ENCODE measurements at regions of chr9 and their contacts with region 1.

Region 1: GRCh38 chr9:27529316-27530278 is at the start of gene MOB3B:
- DNase-seq: peak; percentile 82
- H3K4me3 Mint-ChIP-seq: peak within 1 kb of the TSS; percentile 85
- H3K27ac Mint-ChIP-seq: no peak within 1 kb of the TSS
- H3K4me1 Mint-ChIP-seq: peaks cover 4% of the 10 kb centered on the region
- H3K27me3 Mint-ChIP-seq: peaks cover 6% of the 10 kb centered on the region
- total RNA-seq, gene MOB3B: 0.34 to 0.38 TPM

Region 2: GRCh38 chr9:27333241-27334052 is 196.2 kb before region 1 on chr9:
- CTCF ChIA-PET with region 1: interaction called, 74 read pairs
- POLR2A ChIA-PET with region 1: no interaction called
- intact Hi-C with region 1: loop called (anchors 1 kb)
- DNase-seq: peak; percentile 53
- H3K4me3 Mint-ChIP-seq: no peak overlapping the region
- H3K27ac Mint-ChIP-seq: no peak overlapping the region
- H3K4me1 Mint-ChIP-seq: peaks cover 3% of the 10 kb centered on the region
- H3K27me3 Mint-ChIP-seq: peaks cover 2% of the 10 kb centered on the region

Region 3: DNA sequence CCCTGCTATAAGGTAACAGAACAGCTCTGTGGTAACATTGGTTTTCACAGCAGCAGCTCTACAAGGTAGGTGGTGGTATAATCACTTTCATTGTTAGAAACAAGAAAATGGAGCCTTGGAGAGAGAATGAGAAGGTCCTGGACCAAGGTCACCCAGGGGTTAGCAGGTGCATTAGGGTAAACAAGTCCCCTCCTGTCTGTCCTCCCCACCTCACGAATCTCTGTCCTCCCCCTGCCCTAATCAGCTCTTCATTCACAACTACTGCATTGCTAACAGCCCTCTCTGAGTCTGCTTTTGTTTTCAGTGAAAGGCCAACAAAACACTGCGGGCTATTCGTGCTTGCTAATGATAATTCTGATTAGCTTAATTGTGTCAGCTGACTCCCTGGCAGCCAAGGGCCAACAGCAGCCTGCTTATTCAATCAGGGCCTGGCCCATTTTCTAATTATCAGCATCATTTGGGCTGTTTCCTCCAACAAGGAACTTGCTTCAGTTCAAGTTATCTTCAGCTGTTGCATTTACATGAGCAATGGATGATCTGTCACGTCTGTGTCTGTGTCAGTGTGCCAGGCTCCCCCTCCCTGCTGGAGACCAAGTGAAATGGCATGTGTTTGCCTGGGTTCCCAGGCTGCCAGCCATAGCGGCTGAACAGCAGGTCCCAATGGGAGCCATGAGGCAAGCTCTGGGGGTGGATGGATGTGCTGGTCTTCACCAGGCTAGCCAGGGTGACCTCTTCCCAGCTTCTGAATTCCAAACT is 175.9 kb before region 1 on chr9:
- CTCF ChIA-PET with region 1: interaction called, 4 read pairs
- POLR2A ChIA-PET with region 1: no interaction called
- intact Hi-C with region 1: loop called (anchors 5 kb)
- DNase-seq: no peak
- H3K4me3 Mint-ChIP-seq: no peak overlapping the region
- H3K27ac Mint-ChIP-seq: no peak overlapping the region
- H3K4me1 Mint-ChIP-seq: peaks cover 8% of the 10 kb centered on the region
- H3K27me3 Mint-ChIP-seq: no peaks in the 10 kb centered on the region

Region 4: DNA sequence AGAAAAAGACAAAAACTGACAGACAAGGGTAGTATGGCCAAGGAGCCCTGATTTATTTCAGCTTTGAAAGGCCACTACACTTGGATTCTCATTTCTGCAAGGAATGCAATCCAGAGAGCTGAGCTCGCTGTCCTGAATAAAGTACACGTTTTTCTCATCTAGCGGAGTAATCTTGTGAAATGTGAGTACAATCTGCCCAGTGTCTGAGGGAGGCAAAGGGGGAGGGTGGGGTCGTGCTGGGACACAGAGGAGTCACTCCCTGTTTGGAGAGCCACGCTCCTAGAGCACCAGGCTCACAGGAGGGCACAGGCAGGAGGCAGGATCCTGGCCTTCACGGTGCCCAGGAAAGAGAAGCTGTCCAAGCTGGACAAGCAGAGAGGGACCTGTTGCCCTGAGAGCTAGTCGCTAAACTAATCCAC is 56.5 kb before region 1 on chr9:
- CTCF ChIA-PET with region 1: no interaction called
- POLR2A ChIA-PET with region 1: no interaction called
- intact Hi-C with region 1: no loop called
- DNase-seq: no peak
- H3K4me3 Mint-ChIP-seq: no peak overlapping the region
- H3K27ac Mint-ChIP-seq: no peak overlapping the region
- H3K4me1 Mint-ChIP-seq: no peaks in the 10 kb centered on the region
- H3K27me3 Mint-ChIP-seq: no peaks in the 10 kb centered on the region

Region 5: DNA sequence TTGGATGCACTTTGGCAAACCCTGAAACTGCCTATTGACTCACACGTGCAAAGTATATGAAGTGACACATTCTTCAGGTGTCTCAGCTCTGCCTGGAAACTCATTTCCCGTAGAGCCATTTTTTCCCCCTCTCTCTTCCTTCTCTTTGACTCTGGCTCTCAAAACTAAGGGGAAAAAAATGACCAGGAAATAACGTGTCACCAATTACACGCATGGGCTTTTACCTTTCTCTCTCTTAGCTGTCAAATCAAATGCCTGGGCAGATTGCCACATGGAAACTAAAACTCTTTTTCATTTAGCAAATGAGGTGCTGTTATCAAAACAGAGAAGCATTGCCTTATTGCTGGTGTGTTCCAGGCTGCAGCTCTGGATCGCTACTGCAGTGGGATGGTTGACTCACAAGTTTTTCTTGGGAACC is 23.8 kb before region 1 on chr9:
- CTCF ChIA-PET with region 1: interaction called, 12 read pairs
- POLR2A ChIA-PET with region 1: no interaction called
- intact Hi-C with region 1: loop called (anchors 2 kb)
- DNase-seq: no peak
- H3K4me3 Mint-ChIP-seq: no peak overlapping the region
- H3K27ac Mint-ChIP-seq: no peak overlapping the region
- H3K4me1 Mint-ChIP-seq: peaks cover 8% of the 10 kb centered on the region
- H3K27me3 Mint-ChIP-seq: peaks cover 11% of the 10 kb centered on the region

Region 6: DNA sequence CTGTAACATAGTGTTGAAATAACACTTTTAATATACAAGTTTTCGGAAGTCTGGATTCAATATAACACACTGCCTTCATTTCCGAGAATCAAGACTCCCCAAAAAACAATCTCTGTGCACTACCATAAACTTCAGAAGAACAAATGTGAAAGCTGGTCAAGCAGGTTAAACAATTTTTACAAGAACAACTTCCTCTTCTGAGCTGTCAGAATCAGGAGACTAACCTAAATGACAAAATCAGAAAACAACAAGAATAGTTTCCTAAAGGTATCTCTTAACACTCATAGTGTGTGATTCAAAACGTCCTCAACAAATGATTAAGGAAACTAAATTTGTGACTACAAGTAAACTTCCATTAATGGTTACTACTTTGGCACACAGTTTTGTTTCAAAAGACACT is 32.1 kb after region 1 on chr9:
- CTCF ChIA-PET with region 1: interaction called, 13 read pairs
- POLR2A ChIA-PET with region 1: no interaction called
- intact Hi-C with region 1: no loop called
- DNase-seq: no peak
- H3K4me3 Mint-ChIP-seq: no peak overlapping the region
- H3K27ac Mint-ChIP-seq: no peak overlapping the region
- H3K4me1 Mint-ChIP-seq: peaks cover 9% of the 10 kb centered on the region
- H3K27me3 Mint-ChIP-seq: no peaks in the 10 kb centered on the region

Region 7: GRCh38 chr9:27573634-27574590 is 44.3 kb after region 1 on chr9:
- CTCF ChIA-PET with region 1: interaction called, 4 read pairs
- POLR2A ChIA-PET with region 1: interaction called, 3 read pairs
- intact Hi-C with region 1: loop called (anchors 1 kb)
- DNase-seq: peak; percentile 97
- H3K4me3 Mint-ChIP-seq: peak overlapping the region; percentile 91
- H3K27ac Mint-ChIP-seq: peak overlapping the region; percentile 100
- H3K4me1 Mint-ChIP-seq: peaks cover 29% of the 10 kb centered on the region
- H3K27me3 Mint-ChIP-seq: no peaks in the 10 kb centered on the region

Region 8: GRCh38 chr9:27590651-27591050 is 61.1 kb after region 1 on chr9:
- CTCF ChIA-PET with region 1: no interaction called
- POLR2A ChIA-PET with region 1: no interaction called
- intact Hi-C with region 1: no loop called
- DNase-seq: no peak
- H3K4me3 Mint-ChIP-seq: no peak overlapping the region
- H3K27ac Mint-ChIP-seq: no peak overlapping the region
- H3K4me1 Mint-ChIP-seq: no peaks in the 10 kb centered on the region
- H3K27me3 Mint-ChIP-seq: peaks cover 34% of the 10 kb centered on the region

Measured in activated CD4-positive, alpha-beta memory T cell treated with anti-CD3 and anti-CD28 coated beads for 36 hours (primary cell).